ENCODE measurements at regions of chr6 and their contacts with region 1.

Region 1: GRCh38 chr6:57172136-57173055 is at the start of gene BAG2:
- DNase-seq: peak; percentile 97
- H3K4me3 Mint-ChIP-seq: peak within 1 kb of the TSS; percentile 89
- H3K27ac Mint-ChIP-seq: peak within 1 kb of the TSS; percentile 93
- H3K4me1 Mint-ChIP-seq: peaks cover 24% of the 10 kb centered on the region
- H3K27me3 Mint-ChIP-seq: no peaks in the 10 kb centered on the region
- total RNA-seq, gene BAG2: 13.1 and 13.2 TPM in 2 replicates

Region 2: DNA sequence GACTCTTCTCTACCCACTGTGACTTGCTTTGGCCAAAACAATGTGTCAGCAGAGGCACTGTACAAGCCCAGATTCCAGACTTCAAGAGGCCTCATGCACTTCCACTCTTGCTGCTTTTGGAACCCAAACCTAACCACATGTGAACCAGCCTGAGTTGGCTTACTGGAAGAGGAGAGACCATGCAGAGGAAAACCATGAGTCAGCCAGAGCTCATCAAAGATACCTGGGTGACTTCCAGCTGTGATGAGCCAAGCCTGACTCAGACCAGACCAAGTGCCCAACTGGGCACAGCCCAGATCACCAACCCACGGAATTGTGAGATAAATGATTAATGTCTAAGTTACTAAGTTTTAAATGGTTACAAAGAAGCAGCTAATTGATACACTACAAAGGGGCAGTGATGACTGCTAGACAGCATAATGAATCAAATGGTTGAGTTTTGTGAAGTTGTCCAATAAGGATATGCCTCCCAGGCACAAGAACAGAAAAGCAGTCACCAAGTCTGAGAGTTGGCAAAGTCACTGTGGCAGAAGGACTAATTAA is 233.7 kb before region 1 on chr6:
- intact Hi-C with region 1: no loop called
- DNase-seq: no peak
- H3K4me3 Mint-ChIP-seq: no peak overlapping the region
- H3K27ac Mint-ChIP-seq: no peak overlapping the region
- H3K4me1 Mint-ChIP-seq: no peaks in the 10 kb centered on the region
- H3K27me3 Mint-ChIP-seq: peaks cover 5% of the 10 kb centered on the region

Region 3: DNA sequence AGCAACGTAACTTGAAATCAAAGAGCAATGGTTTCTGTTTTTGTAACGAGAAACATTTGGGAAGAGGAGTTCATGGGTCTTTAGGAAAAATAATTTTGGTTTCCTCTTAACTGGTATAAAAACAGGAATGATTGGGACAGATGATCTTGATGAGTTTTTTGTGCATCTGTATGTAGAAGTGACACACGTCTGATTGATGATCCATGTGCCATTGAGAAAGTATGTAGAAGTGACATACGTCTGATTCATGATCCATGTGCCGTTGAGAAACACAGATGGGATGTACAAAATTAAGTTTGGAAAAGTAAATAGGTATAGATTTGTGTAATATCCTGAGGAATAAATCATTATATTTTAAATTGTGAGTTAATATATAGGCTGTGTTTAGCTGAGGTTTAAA is 123.8 kb before region 1 on chr6:
- intact Hi-C with region 1: loop called (anchors 1 kb)
- DNase-seq: no peak
- H3K4me3 Mint-ChIP-seq: peak overlapping the region; percentile 81
- H3K27ac Mint-ChIP-seq: no peak overlapping the region
- H3K4me1 Mint-ChIP-seq: peaks cover 21% of the 10 kb centered on the region
- H3K27me3 Mint-ChIP-seq: peaks cover 22% of the 10 kb centered on the region

Region 4: GRCh38 chr6:57147955-57148858 is 24.2 kb before region 1 on chr6:
- intact Hi-C with region 1: loop called (anchors 1 kb)
- DNase-seq: no peak
- H3K4me3 Mint-ChIP-seq: peak overlapping the region; percentile 51
- H3K27ac Mint-ChIP-seq: peak overlapping the region; percentile 88
- H3K4me1 Mint-ChIP-seq: peaks cover 16% of the 10 kb centered on the region
- H3K27me3 Mint-ChIP-seq: no peaks in the 10 kb centered on the region

Region 5: DNA sequence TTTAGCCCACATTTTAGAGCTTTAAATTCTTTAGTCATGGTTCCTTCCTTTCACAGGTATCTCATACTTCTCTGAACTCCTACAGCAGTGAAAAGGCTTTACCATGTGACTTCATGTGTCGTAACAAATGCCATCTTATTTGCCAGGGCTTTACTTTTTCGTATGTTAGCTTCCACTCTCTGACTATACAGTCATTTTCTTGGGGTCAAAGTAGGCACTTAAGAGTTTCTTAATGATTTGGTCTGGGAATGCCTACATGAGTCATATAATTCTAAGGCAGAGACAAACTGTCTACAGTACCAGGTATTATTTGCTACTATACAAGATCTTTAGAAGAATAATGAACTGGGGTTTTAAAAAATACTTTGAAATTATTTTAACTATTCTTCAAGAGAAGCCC is 34.7 kb after region 1 on chr6:
- intact Hi-C with region 1: loop called (anchors 5 kb)
- DNase-seq: no peak
- H3K4me3 Mint-ChIP-seq: no peak overlapping the region
- H3K27ac Mint-ChIP-seq: no peak overlapping the region
- H3K4me1 Mint-ChIP-seq: peaks cover 12% of the 10 kb centered on the region
- H3K27me3 Mint-ChIP-seq: no peaks in the 10 kb centered on the region

Measured in activated CD4-positive, alpha-beta T cell treated with anti-CD3 and anti-CD28 coated beads, Interleukin-2, amount 10 ng/mL, durations not matched to agents 24 days and 14 days (primary cell).